Ovary (tissue), 10 donors: ENCODE measurements at regions of chr10 and their contacts with region 1.

Region 1: GRCh38 chr10:45180946-45181875 is 134.2 kb downstream of the OR13A1 start:
- DNase-seq: no peak
- H3K4me3 ChIP-seq: no peak overlapping the region
- H3K27ac ChIP-seq: no peak overlapping the region
- H3K4me1 ChIP-seq: no peaks in the 10 kb centered on the region
- H3K27me3 ChIP-seq: no peaks in the 10 kb centered on the region
- CTCF ChIP-seq: no peak
- EP300 ChIP-seq: no peak
- POLR2A ChIP-seq: no peak

Region 2: DNA sequence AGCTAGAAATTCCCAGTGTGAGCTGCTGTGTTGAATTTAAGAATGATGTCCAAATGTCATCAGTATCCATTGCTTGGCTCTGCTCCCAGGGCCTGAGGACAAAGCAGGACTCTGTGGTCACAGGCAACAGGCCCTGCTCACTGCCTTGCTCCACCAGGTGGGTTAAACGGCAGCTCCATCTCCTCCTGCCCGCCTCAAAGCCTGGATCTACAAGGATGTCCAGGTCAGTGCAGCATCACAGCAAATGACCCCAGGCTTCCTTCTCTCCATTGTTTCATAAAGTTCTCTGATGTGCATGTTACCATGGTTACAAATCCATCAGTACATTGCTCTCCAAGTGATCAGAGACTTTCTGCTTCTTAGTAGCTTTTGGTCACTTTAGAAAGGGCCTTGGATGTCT is 1210.5 kb before region 1 on chr10:
- intact Hi-C with region 1: loop called in 1 of 4 experiments (anchors 5 kb)
- DNase-seq: no peak
- H3K4me3 ChIP-seq: no peak overlapping the region
- H3K27ac ChIP-seq: no peak overlapping the region
- H3K4me1 ChIP-seq: no peaks in the 10 kb centered on the region
- H3K27me3 ChIP-seq: no peaks in the 10 kb centered on the region
- CTCF ChIP-seq: no peak
- EP300 ChIP-seq: no peak
- POLR2A ChIP-seq: no peak